Activated naive CD4-positive, alpha-beta T cell treated with anti-CD3 and anti-CD28 coated beads for 36 hours (primary cell): ENCODE measurements at regions of chr4 and their contacts with region 1.

Region 1: GRCh38 chr4:55345980-55346850 is at the start of gene SRD5A3:
- DNase-seq: peak; percentile 80
- H3K4me3 Mint-ChIP-seq: peak within 1 kb of the TSS; percentile 87
- H3K27ac Mint-ChIP-seq: peak within 1 kb of the TSS; percentile 90
- H3K4me1 Mint-ChIP-seq: peaks cover 20% of the 10 kb centered on the region
- H3K27me3 Mint-ChIP-seq: no peaks in the 10 kb centered on the region
- total RNA-seq, gene SRD5A3: 21.7 to 22.3 TPM

Region 2: DNA sequence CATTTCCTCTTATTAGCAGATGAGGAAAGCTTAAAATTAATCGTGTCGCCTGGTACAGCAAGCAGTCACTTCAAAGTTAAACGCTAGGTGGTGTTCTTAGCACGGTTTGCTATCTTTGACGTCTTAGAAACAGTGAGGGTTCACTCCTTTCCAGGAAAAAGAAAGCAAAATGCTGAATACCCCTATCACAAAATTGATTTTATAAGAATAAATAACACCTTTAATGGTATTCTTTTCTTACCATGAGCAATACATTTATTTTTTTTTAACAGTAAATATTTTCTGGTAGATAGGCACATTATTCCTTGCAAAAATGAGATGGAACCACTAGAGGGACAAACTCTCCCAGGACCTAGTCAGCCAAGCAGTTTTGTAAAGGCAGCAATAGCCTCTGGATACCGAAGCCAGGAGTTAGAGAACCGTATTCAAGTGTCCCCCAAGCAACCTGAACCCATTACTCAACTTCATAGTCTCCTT is 374.7 kb before region 1 on chr4:
- CTCF ChIA-PET with region 1: interaction called, 14 read pairs
- intact Hi-C with region 1: no loop called
- DNase-seq: peak; percentile 27
- H3K4me3 Mint-ChIP-seq: no peak overlapping the region
- H3K27ac Mint-ChIP-seq: no peak overlapping the region
- H3K4me1 Mint-ChIP-seq: peaks cover 2% of the 10 kb centered on the region
- H3K27me3 Mint-ChIP-seq: peaks cover 5% of the 10 kb centered on the region

Region 3: GRCh38 chr4:55255179-55255578 is 91.0 kb before region 1 on chr4:
- CTCF ChIA-PET with region 1: no interaction called
- intact Hi-C with region 1: no loop called
- DNase-seq: no peak
- H3K4me3 Mint-ChIP-seq: no peak overlapping the region
- H3K27ac Mint-ChIP-seq: no peak overlapping the region
- H3K4me1 Mint-ChIP-seq: no peaks in the 10 kb centered on the region
- H3K27me3 Mint-ChIP-seq: peaks cover 11% of the 10 kb centered on the region

Region 4: DNA sequence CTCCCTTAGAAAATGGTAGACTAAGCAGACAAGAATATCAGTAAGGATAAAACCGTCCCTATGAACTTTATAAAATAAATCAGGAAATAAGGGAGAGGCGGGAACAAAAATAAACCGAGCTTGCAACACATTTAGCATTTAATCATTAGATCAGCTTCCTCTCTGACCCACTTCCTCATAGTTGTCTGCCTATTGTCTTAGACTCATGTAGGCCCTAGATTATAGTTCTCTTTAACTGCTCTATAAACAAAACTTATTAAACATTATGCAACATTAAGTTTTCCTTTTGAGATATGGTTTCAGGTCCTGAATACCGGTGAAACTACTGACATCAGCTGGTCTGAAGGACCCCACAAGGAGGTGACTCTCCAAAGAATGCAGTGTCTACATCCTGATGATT is 16.0 kb before region 1 on chr4:
- CTCF ChIA-PET with region 1: interaction called, 13 read pairs
- intact Hi-C with region 1: no loop called
- DNase-seq: no peak
- H3K4me3 Mint-ChIP-seq: no peak overlapping the region
- H3K27ac Mint-ChIP-seq: no peak overlapping the region
- H3K4me1 Mint-ChIP-seq: peaks cover 7% of the 10 kb centered on the region
- H3K27me3 Mint-ChIP-seq: no peaks in the 10 kb centered on the region

Region 5: GRCh38 chr4:55435141-55435841 is 89.1 kb after region 1 on chr4:
- CTCF ChIA-PET with region 1: interaction called, 8 read pairs
- intact Hi-C with region 1: loop called (anchors 1 kb)
- DNase-seq: peak; percentile 68
- H3K4me3 Mint-ChIP-seq: no peak overlapping the region
- H3K27ac Mint-ChIP-seq: peak overlapping the region; percentile 37
- H3K4me1 Mint-ChIP-seq: peaks cover 16% of the 10 kb centered on the region
- H3K27me3 Mint-ChIP-seq: no peaks in the 10 kb centered on the region

Region 6: DNA sequence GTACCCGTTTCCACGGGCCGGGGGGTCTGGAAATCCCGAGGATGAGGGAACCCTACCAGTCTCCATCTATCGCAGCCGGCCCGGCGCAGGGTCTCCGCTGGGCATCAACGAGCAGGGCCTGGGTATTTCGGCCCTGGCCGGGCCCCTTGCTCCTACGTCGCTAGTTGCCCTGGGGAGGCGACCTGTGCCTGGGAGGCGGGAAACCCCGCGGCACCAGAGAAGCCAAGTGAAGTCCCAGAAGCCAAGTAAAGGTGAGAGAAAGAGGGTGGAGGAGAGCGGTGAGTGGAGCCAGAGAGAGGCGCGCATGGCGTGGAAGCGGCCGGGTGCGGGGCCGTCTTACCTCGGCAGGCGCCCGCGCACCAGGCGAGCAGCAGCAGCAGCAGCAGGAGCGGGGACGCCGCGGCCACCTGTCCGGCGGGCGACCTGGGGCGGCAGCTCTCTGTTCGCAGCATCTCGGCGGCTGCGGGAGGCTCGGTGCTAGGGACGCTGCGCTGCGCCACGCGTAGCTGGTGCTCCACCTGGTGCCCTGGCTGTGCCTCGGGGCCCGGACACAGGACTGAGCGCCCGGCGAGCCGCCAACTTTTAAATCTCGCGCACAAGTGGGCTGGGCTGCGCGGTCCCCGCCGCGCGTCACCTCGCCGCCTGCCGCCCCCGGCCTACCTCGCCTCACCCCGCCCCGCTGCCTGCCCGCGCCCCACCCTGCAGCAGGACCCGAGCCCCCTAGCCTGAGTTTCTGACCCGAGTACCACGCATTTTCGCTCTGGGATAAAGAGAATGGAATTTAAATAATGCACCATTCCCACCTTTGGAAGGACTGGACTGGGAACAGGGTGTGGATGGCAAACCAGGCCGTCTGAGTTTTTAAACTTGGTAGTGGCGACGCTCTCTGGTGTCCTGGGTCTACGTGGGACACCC is 289.8 kb after region 1 on chr4 and contains the start of gene NMU:
- CTCF ChIA-PET with region 1: no interaction called
- intact Hi-C with region 1: loop called (anchors 1 kb)
- DNase-seq: peak; percentile 58
- H3K4me3 Mint-ChIP-seq: peak within 1 kb of the TSS; percentile 69
- H3K27ac Mint-ChIP-seq: no peak within 1 kb of the TSS
- H3K4me1 Mint-ChIP-seq: peaks cover 15% of the 10 kb centered on the region
- H3K27me3 Mint-ChIP-seq: peaks cover 51% of the 10 kb centered on the region
- total RNA-seq, gene NMU: not detected

Region 7: DNA sequence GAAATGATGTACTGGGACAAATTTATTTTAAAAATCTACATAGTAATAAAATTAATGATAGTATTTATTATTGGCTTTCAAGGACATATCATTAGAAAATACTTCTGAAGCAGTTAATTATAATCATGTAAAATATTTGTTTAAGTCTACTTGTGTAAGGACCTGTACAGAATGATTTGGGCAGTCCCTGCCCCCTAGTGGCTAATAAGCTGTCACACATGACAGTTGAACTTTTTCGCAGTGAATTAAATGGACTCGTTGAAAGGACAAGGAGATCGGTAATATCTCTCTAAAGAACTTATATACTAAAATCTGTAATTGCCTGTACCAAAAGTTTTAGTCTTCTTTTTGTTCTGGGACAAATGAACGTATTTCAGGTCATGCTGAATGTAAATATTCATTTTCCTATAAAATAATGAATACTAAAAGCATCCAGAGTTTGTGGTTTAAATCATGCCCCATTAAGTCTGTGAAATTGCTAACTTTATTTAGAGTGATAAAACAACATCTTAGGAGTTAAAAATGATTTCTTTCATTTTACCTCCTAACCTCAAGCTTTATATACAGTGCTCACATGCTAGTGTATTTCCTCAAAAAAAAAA is 520.9 kb after region 1 on chr4:
- CTCF ChIA-PET with region 1: interaction called, 4 read pairs
- intact Hi-C with region 1: loop called (anchors 1 kb)
- DNase-seq: peak; percentile 13
- H3K4me3 Mint-ChIP-seq: no peak overlapping the region
- H3K27ac Mint-ChIP-seq: no peak overlapping the region
- H3K4me1 Mint-ChIP-seq: peaks cover 16% of the 10 kb centered on the region
- H3K27me3 Mint-ChIP-seq: no peaks in the 10 kb centered on the region